Activated T-helper 1 cell treated with anti-CD3 and anti-CD28 coated beads, Interleukin-12 subunit alpha, Interleukin-12 subunit beta, Interleukin-2, Interleukin-4 antibody, amounts not matched to agents 30 ng/mL and 10 ng/mL and 1 ng/mL, durations not matched to agents 14 hours and 24 hours and 36 hours (primary cell): ENCODE measurements at regions of chr10 and their contacts with region 1.

Region 1: DNA sequence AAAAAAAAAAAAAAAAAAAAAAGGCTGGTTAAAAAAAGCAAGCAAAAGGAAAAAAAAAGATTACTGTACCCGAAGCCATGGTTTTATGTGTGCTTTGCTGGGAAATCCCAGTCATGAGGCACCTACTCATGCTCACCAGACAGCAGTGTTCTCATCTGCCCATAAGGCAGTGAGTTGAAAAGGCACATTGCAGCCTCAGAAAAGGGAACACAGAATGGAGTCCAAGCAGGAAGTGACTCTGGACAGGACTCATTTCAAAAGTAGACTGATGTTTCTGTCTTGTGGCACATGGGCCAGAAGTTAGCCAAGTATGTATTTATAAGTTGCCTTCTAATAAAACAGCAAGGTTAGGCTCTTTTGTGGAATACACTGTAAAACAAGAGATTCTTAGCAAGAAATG is 40.2 kb downstream of the PDSS1 start:
- DNase-seq: peak; percentile 59
- H3K4me3 Mint-ChIP-seq: peak overlapping the region; percentile 45
- H3K27ac Mint-ChIP-seq: peak overlapping the region; percentile 99
- H3K4me1 Mint-ChIP-seq: peaks cover 74% of the 10 kb centered on the region
- H3K27me3 Mint-ChIP-seq: no peaks in the 10 kb centered on the region

Region 2: DNA sequence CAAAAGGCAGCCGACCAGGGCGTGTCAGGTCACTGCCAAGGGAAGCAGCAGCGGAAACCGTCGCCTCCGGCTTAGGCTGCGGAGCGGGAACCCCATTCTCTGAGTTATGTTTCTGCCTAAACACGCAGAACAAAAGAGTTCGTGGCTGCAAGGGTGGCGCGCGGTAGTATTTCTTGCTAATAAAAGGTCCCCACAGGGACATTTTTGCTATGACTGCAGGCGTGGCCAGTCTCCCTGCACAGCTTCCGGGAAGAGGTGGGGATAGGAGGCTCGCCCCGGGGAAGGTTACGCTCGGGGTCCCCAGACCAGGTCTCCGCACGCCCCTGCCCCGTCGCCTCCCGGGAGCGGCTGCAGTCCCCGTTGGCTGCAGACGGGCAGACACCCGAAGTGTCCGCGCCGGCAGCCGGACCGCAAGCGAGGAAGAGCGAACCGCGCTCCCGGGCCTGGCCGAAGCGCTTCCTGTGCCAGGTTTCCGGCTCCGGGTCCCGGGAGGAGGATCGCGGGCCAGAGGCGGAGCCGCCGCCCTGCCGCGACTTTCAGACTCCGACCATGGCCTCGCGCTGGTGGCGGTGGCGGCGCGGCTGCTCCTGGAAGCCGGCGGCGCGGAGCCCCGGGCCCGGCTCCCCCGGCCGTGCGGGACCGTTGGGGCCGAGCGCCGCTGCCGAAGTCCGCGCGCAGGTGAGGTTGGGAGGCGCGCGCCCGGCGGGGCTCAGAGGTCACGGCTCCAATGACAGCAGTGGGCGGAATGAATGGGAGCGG is 40.4 kb before region 1 on chr10 and contains the start of gene PDSS1:
- intact Hi-C with region 1: loop called (anchors 5 kb)
- DNase-seq: peak; percentile 64
- H3K4me3 Mint-ChIP-seq: peak within 1 kb of the TSS; percentile 100
- H3K27ac Mint-ChIP-seq: peak within 1 kb of the TSS; percentile 94
- H3K4me1 Mint-ChIP-seq: peaks cover 31% of the 10 kb centered on the region
- H3K27me3 Mint-ChIP-seq: no peaks in the 10 kb centered on the region
- total RNA-seq, gene PDSS1: 39.3 and 43.1 TPM in 2 replicates

Region 3: DNA sequence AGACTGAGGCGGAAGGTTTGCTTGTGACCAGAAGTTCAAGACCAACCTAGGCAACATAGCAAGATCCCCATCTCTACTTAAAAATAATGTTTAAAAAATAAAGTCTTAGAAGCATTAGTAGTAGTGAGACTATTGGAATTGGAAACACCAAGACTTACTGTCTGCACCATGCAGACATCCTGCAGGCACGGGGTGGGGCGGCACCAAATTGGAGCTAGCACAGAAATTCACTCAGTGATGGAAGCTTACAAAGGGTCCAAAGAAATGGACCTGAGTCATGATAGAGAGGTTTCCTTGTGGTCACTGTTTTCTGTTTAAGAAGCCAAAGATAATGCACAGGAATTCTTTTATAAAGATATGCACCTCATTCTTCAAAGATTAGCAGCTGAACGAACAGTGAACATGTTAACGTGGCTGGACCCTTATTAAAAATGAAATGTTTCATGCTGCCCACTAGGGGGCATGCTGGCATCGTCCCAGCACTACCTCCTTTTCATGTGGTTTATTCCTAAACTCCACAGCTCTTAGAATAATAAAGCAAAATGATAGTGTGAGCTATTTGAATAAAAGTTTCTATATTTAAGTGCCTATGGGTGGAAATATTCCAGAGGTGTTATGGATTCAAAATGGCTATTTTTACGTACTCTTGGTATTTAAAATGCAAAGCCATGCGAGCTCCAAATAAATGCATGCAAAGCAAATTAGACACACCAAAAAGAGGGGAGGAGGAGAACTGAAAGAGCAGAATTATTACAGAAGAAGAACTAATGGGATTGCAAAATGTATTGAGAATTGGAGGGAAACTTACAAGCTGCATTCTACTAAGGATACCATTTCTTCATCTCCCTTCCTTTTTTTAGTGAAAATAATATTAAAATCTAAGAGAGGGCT is 11.6 kb before region 1 on chr10:
- intact Hi-C with region 1: loop called (anchors 1 kb)
- DNase-seq: no peak
- H3K4me3 Mint-ChIP-seq: no peak overlapping the region
- H3K27ac Mint-ChIP-seq: peak overlapping the region; percentile 42
- H3K4me1 Mint-ChIP-seq: peaks cover 15% of the 10 kb centered on the region
- H3K27me3 Mint-ChIP-seq: no peaks in the 10 kb centered on the region

Region 4: GRCh38 chr10:26969145-26969926 is 231.6 kb after region 1 on chr10:
- intact Hi-C with region 1: loop called (anchors 5 kb)
- DNase-seq: no peak
- H3K4me3 Mint-ChIP-seq: no peak overlapping the region
- H3K27ac Mint-ChIP-seq: peak overlapping the region; percentile 21
- H3K4me1 Mint-ChIP-seq: peaks cover 37% of the 10 kb centered on the region
- H3K27me3 Mint-ChIP-seq: no peaks in the 10 kb centered on the region